ENCODE measurements at regions of chr11 and their contacts with region 1.

Region 1: GRCh38 chr11:86938900-86939880 is 16.0 kb downstream of the FZD4 start:
- DNase-seq: peak in 2 of 4 donors; percentile 20 to 47
- ATAC-seq: peak; percentile 56
- H3K4me3 ChIP-seq: no peak overlapping the region
- H3K27ac ChIP-seq: peak overlapping the region in 3 of 4 donors; percentile 69 to 80 (median 75)
- H3K4me1 ChIP-seq: peaks cover 31% of the 10 kb centered on the region
- H3K27me3 ChIP-seq: no peaks in the 10 kb centered on the region
- CTCF ChIP-seq: peak; percentile 22 to 85 (median 68)
- POLR2A ChIP-seq: no peak

Region 2: GRCh38 chr11:87286338-87286737 is 347.1 kb after region 1 on chr11:
- intact Hi-C with region 1: loop called (anchors 5 kb)
- DNase-seq: no peak
- ATAC-seq: no peak
- H3K4me3 ChIP-seq: no peak overlapping the region
- H3K27ac ChIP-seq: no peak overlapping the region
- H3K4me1 ChIP-seq: no peaks in the 10 kb centered on the region
- H3K27me3 ChIP-seq: no peaks in the 10 kb centered on the region
- CTCF ChIP-seq: no peak
- POLR2A ChIP-seq: no peak

Region 3: DNA sequence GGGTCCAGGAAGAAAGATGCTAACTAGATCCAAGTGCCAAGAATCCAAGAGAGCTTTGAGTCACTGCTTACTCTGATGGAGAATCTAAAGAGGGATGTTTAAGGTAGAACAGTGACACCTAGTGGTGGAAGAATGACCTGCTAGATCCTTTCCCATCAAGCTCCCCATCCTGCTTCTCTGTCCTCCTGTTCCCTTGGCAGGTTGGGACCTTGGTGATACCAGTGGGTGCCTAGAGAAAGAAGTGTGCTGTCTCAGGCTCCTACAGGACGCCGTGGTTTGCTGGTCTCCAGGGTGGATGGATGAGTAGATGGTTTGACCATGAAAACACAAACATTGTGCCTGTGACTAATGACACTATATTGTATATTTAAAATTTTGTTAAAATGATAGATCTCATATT is 482.2 kb after region 1 on chr11:
- intact Hi-C with region 1: loop called (anchors 10 kb)
- DNase-seq: peak; percentile 24 to 69 (median 41)
- ATAC-seq: peak; percentile 81
- H3K4me3 ChIP-seq: no peak overlapping the region
- H3K27ac ChIP-seq: no peak overlapping the region
- H3K4me1 ChIP-seq: no peaks in the 10 kb centered on the region
- H3K27me3 ChIP-seq: no peaks in the 10 kb centered on the region
- CTCF ChIP-seq: peak; percentile 53 to 77 (median 71)
- POLR2A ChIP-seq: no peak